ENCODE measurements at regions of chr9 and their contacts with region 1.

Region 1: GRCh38 chr9:3478549-3478953 is 47.2 kb downstream of the RFX3 start:
- DNase-seq: peak; percentile 25
- H3K4me3 Mint-ChIP-seq: no peak overlapping the region
- H3K27ac Mint-ChIP-seq: peak overlapping the region; percentile 66
- H3K4me1 Mint-ChIP-seq: peaks cover 71% of the 10 kb centered on the region
- H3K27me3 Mint-ChIP-seq: no peaks in the 10 kb centered on the region

Region 2: GRCh38 chr9:3385871-3386270 is 92.7 kb before region 1 on chr9:
- CTCF ChIA-PET with region 1: no interaction called
- POLR2A ChIA-PET with region 1: interaction called, 3 read pairs
- intact Hi-C with region 1: loop called (anchors 1 kb)
- DNase-seq: peak; percentile 65
- H3K4me3 Mint-ChIP-seq: no peak overlapping the region
- H3K27ac Mint-ChIP-seq: no peak overlapping the region
- H3K4me1 Mint-ChIP-seq: peaks cover 29% of the 10 kb centered on the region
- H3K27me3 Mint-ChIP-seq: no peaks in the 10 kb centered on the region

Region 3: GRCh38 chr9:3467593-3468219 is 10.8 kb before region 1 on chr9:
- CTCF ChIA-PET with region 1: interaction called, 10 read pairs
- POLR2A ChIA-PET with region 1: no interaction called
- intact Hi-C with region 1: no loop called
- DNase-seq: peak; percentile 70
- H3K4me3 Mint-ChIP-seq: no peak overlapping the region
- H3K27ac Mint-ChIP-seq: no peak overlapping the region
- H3K4me1 Mint-ChIP-seq: peaks cover 13% of the 10 kb centered on the region
- H3K27me3 Mint-ChIP-seq: no peaks in the 10 kb centered on the region

Region 4: GRCh38 chr9:3508521-3509291 is 30.2 kb after region 1 on chr9:
- CTCF ChIA-PET with region 1: no interaction called
- POLR2A ChIA-PET with region 1: interaction called, 4 read pairs
- intact Hi-C with region 1: loop called (anchors 1 kb)
- DNase-seq: no peak
- H3K4me3 Mint-ChIP-seq: peak overlapping the region; percentile 44
- H3K27ac Mint-ChIP-seq: peak overlapping the region; percentile 60
- H3K4me1 Mint-ChIP-seq: peaks cover 52% of the 10 kb centered on the region
- H3K27me3 Mint-ChIP-seq: no peaks in the 10 kb centered on the region

Region 5: GRCh38 chr9:3746296-3747275 is 268.0 kb after region 1 on chr9:
- CTCF ChIA-PET with region 1: no interaction called
- POLR2A ChIA-PET with region 1: no interaction called
- intact Hi-C with region 1: loop called (anchors 5 kb)
- DNase-seq: peak; percentile 68
- H3K4me3 Mint-ChIP-seq: no peak overlapping the region
- H3K27ac Mint-ChIP-seq: peak overlapping the region; percentile 57
- H3K4me1 Mint-ChIP-seq: peaks cover 23% of the 10 kb centered on the region
- H3K27me3 Mint-ChIP-seq: peaks cover 3% of the 10 kb centered on the region

Region 6: DNA sequence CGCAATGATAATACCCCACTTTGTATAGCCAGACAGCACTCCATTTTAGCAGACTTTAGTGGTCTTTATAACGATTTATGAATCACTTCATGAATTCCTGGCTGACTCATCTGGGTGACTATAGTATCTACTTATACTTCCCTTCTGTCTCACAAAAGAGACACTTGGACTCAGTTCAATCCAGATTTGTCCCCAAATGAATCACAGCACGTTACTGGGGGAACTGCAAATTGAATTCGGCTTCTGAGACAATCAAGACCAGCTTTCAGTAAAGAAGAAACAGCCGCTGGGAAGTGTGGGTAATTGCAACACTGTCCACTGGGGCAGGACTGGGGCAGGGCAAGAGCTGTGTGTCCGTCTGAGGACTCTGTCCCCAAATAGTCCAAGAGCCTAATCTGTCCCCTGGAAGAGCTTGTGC is 384.6 kb after region 1 on chr9:
- CTCF ChIA-PET with region 1: no interaction called
- POLR2A ChIA-PET with region 1: no interaction called
- intact Hi-C with region 1: loop called (anchors 10 kb)
- DNase-seq: no peak
- H3K4me3 Mint-ChIP-seq: no peak overlapping the region
- H3K27ac Mint-ChIP-seq: no peak overlapping the region
- H3K4me1 Mint-ChIP-seq: no peaks in the 10 kb centered on the region
- H3K27me3 Mint-ChIP-seq: peaks cover 17% of the 10 kb centered on the region

Region 7: DNA sequence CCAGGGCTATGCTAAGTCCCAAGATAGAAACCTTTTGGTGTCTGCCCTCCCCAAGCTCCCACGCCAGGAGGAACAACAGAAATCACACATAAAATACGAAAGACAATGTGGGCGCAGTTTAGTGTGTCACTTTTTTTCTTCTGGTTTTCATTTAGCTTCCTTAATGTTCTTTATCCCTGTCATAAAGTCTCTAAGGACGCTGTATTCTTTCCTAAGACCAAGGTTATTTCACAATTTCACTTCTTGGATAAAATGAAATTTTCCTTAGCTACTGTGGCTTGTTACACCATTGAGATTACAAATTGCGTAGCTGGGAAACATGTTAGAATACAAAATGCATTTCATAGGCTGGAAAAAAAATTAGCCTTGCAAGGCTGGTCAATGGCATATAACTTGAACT is 735.9 kb after region 1 on chr9:
- CTCF ChIA-PET with region 1: no interaction called
- POLR2A ChIA-PET with region 1: no interaction called
- intact Hi-C with region 1: no loop called
- DNase-seq: no peak
- H3K4me3 Mint-ChIP-seq: no peak overlapping the region
- H3K27ac Mint-ChIP-seq: no peak overlapping the region
- H3K4me1 Mint-ChIP-seq: no peaks in the 10 kb centered on the region
- H3K27me3 Mint-ChIP-seq: peaks cover 3% of the 10 kb centered on the region